RWPE1 (cell line): ENCODE measurements at regions of chr7 and their contacts with region 1.

Region 1: GRCh38 chr7:50142425-50143017 is 49.5 kb upstream of the ZPBP start:
- DNase-seq: no peak
- H3K27ac ChIP-seq: no peak overlapping the region
- CTCF ChIP-seq: peak; percentile 86

Region 2: DNA sequence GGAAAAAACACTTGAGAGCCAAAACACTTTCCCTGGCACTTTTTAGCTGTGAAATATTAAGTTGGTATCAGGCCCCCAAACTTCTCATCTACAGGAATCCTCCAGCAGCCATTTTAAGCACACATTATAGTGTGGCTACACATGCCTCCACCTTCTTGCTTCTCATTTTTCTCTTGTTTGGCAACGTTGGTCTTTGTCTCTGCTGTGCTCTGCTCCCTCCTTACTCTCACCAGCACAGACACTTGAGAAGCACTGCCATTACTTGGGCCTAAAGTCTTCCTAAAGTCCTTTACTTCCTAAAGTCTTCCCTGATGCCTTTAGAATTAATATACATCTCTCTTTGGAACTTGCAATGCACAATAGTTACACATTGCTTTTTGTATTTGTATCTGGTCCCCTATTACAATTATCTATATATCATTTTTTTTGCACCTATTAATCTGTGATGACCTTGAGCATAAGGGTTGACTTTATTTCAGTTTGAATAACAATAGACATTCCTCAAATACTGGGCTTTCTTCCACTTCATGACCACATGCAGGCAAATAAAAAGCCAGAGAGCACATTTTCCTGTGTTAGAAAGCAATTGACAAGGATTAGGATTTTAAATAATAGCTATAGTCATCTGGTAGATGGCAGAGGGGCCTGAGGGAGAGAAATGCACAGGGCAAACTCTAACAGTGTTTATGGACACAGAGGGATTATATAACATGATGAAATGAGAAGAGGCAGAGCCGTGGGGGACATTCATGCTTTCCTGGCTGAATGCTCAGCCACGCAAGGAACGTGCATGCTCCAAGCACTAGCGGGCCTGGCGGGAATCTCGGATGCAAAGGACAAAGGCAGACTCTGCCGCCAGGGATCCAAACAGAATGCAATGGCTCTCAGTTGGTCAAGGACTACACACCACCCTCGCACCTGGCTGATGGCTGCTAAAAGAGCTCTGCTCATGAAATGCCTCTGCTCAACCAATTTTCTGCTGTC is 1118.9 kb before region 1 on chr7:
- CTCF ChIA-PET with region 1: interaction called, 10 read pairs
- POLR2A ChIA-PET with region 1: no interaction called
- DNase-seq: no peak
- H3K27ac ChIP-seq: no peak overlapping the region
- CTCF ChIP-seq: no peak

Region 3: DNA sequence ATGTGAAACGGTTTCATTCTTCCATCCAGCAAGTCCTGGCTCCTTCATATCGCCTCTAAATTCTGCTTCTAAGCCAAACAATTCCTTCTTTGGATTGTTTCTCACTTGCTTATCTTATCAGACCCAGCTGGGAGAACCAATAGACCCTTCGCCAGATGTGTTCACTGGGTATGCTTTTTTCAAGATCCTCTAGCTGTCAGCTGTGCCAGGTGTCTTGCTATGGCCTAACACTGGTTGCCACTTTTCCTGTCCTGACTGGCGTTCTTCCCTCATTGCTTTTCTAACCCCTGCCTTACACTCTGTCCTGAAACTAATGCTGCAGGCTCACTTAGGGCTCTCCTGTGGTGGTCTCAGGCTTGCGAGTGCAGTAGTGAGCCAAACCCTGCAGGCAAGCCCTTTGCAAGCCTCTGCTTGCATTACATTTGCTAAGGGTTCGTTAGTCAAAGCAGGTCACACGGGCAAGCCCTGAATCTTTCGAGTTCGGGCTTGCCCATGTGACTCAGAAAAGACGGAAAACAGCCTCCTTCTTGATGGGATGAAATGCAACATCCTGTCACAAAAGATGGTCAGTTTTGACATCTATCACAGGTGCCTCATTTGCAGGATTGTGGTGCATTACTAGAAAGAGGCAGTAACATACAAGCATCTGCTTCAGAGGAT is 276.3 kb before region 1 on chr7:
- CTCF ChIA-PET with region 1: no interaction called
- POLR2A ChIA-PET with region 1: no interaction called
- DNase-seq: peak; percentile 76
- H3K27ac ChIP-seq: no peak overlapping the region
- CTCF ChIP-seq: no peak

Region 4: DNA sequence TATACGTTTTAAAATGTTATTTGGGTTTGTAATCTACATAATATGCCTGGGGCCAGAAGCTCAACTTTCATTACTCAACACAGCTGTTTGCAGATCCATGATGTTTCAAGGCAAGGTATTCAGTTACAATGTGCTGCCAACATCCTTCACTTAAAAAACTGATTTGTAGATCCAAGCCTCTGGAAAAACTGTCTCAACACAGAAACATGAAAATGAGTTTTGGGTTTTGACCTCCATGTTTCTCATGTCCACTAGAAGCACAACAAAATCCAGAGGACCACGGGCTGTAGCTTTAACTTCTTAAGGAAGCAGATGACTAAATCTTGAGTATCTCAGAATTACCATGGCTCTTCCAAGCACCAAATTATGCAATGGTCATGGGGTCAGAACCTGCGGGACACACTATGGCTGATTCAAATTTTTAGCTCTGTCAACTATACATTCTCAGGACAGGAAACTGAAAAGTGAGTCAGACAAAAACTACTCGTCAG is 887.2 kb after region 1 on chr7:
- CTCF ChIA-PET with region 1: no interaction called
- POLR2A ChIA-PET with region 1: no interaction called
- DNase-seq: peak; percentile 39
- H3K27ac ChIP-seq: no peak overlapping the region
- CTCF ChIP-seq: no peak